ENCODE measurements at regions of chr12 and their contacts with region 1.

Region 1: GRCh38 chr12:92987362-92987761 is 58.3 kb upstream of the EEA1 start:
- DNase-seq: peak; percentile 48
- H3K4me3 ChIP-seq: no peak overlapping the region; a peak in 1 of 4 replicates
- H3K27ac ChIP-seq: peak overlapping the region in 1 of 2 experiments; percentile 34; a peak in 1 of 4 replicates
- H3K4me1 ChIP-seq: peaks cover 0 to 5% of the 10 kb centered on the region in 2 experiments; a peak in 1 of 4 replicates
- H3K27me3 ChIP-seq: no peaks in the 10 kb centered on the region
- CTCF ChIP-seq: peak; percentile 72
- EP300 ChIP-seq: no peak
- RAD21 ChIP-seq: peak; percentile 91

Region 2: DNA sequence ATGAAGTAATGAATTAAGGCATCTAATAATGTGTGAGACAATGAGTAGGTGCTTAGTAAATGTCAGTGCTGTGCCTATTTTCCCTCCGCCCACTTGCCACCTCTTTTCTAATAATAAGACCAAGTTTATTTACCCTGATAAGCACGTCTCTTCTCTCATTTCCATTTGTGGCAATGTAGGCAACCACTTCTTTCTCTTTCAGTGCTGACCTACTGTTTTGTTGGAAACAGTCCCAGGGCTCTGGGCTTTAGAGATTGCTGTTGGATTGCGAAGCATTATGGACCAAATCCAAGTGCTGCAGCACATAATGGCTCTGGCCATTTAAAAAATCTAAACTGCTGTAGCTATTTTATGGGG is 425.8 kb before region 1 on chr12:
- CTCF ChIA-PET with region 1: no interaction called
- POLR2A ChIA-PET with region 1: no interaction called
- DNase-seq: no peak
- H3K4me3 ChIP-seq: no peak overlapping the region
- H3K27ac ChIP-seq: peak overlapping the region in 1 of 2 experiments; percentile 43; a peak in 2 of 4 replicates
- H3K4me1 ChIP-seq: peaks cover 0 to 2% of the 10 kb centered on the region in 2 experiments; a peak in 2 of 4 replicates
- H3K27me3 ChIP-seq: no peaks in the 10 kb centered on the region
- CTCF ChIP-seq: no peak
- EP300 ChIP-seq: no peak
- RAD21 ChIP-seq: no peak

Region 3: GRCh38 chr12:92879698-92880305 is 107.6 kb before region 1 on chr12:
- CTCF ChIA-PET with region 1: no interaction called
- POLR2A ChIA-PET with region 1: no interaction called
- DNase-seq: no peak
- H3K4me3 ChIP-seq: no peak overlapping the region
- H3K27ac ChIP-seq: no peak overlapping the region
- H3K4me1 ChIP-seq: no peaks in the 10 kb centered on the region
- H3K27me3 ChIP-seq: no peaks in the 10 kb centered on the region
- CTCF ChIP-seq: no peak
- EP300 ChIP-seq: no peak
- RAD21 ChIP-seq: no peak

Region 4: GRCh38 chr12:93002293-93003054 is 15.1 kb after region 1 on chr12:
- CTCF ChIA-PET with region 1: interaction called, 22 read pairs
- POLR2A ChIA-PET with region 1: no interaction called
- DNase-seq: no peak
- H3K4me3 ChIP-seq: no peak overlapping the region
- H3K27ac ChIP-seq: 0 out of 4 replicates have a peak overlapping the region, but pooled peaks of 1 of the 2 experiments have one; percentile 9
- H3K4me1 ChIP-seq: peaks cover 0 to 2% of the 10 kb centered on the region in 2 experiments; a peak in 2 of 4 replicates
- H3K27me3 ChIP-seq: no peaks in the 10 kb centered on the region
- CTCF ChIP-seq: no peak
- EP300 ChIP-seq: no peak
- RAD21 ChIP-seq: no peak

Region 5: DNA sequence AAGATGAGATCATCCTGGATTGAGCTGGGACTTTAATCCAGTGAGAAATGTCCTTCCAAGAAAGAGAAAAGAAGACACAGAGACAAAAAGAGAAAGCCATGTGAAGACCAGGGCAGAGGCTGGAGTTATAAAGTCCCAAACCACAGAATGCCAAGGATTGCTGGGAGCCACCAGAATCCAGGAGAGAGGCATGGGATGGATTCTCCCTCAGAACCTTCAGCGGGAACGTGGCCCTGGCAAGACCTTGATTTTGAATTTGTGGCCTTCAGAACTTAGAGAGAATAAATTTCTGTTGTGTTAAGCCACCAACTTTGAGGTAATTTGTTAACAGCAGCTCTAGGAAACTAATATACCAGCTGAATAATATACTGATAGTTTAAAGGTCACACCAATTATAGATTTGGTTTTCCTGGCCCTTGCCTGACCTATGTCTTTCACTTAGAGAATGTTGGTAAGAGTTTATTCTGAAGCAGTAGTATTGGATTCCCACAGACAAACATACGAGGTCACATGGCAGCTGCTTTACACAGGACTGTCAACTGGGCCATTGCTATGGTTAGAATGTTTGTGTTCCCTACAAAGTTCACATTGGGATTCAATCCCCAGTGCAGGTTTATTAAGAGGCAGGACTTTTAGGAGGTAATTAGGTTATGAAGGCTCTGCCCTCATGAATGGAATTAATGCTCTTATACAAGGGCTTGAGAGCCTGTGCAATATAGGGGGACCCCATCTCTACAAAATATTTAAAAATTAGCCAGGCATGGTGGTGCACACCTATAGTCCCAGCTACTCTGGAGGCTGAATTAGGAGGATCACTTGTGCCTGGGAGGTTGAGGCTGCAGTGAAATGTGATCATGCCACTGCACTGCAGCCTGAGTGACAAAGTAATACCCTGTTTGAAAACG is 98.3 kb after region 1 on chr12:
- CTCF ChIA-PET with region 1: no interaction called
- POLR2A ChIA-PET with region 1: no interaction called
- DNase-seq: no peak
- H3K4me3 ChIP-seq: no peak overlapping the region
- H3K27ac ChIP-seq: no peak overlapping the region
- H3K4me1 ChIP-seq: peaks cover 0 to 28% of the 10 kb centered on the region in 2 experiments; a peak in 2 of 4 replicates
- H3K27me3 ChIP-seq: no peaks in the 10 kb centered on the region
- CTCF ChIP-seq: no peak
- EP300 ChIP-seq: no peak
- RAD21 ChIP-seq: no peak

Region 6: GRCh38 chr12:93380480-93381121 is 393.2 kb after region 1 on chr12:
- CTCF ChIA-PET with region 1: interaction called, 34 read pairs
- POLR2A ChIA-PET with region 1: no interaction called
- DNase-seq: peak; percentile 50
- H3K4me3 ChIP-seq: peak overlapping the region; percentile 73 to 88
- H3K27ac ChIP-seq: peak overlapping the region; percentile 86 to 88
- H3K4me1 ChIP-seq: peaks cover 9 to 15% of the 10 kb centered on the region in 2 experiments; a peak in 3 of 4 replicates
- H3K27me3 ChIP-seq: no peaks in the 10 kb centered on the region
- CTCF ChIP-seq: peak; percentile 55
- EP300 ChIP-seq: no peak
- RAD21 ChIP-seq: peak; percentile 69

Region 7: GRCh38 chr12:93397412-93397811 is 410.1 kb after region 1 on chr12:
- CTCF ChIA-PET with region 1: interaction called, 102 read pairs
- POLR2A ChIA-PET with region 1: no interaction called
- DNase-seq: no peak
- H3K4me3 ChIP-seq: no peak overlapping the region
- H3K27ac ChIP-seq: peak overlapping the region in 1 of 2 experiments; percentile 16; a peak in 1 of 4 replicates
- H3K4me1 ChIP-seq: no peaks in the 10 kb centered on the region
- H3K27me3 ChIP-seq: no peaks in the 10 kb centered on the region
- CTCF ChIP-seq: no peak
- EP300 ChIP-seq: no peak
- RAD21 ChIP-seq: no peak

Region 8: GRCh38 chr12:93419388-93420034 is 432.1 kb after region 1 on chr12:
- CTCF ChIA-PET with region 1: interaction called, 17 read pairs
- POLR2A ChIA-PET with region 1: no interaction called
- DNase-seq: peak; percentile 41
- H3K4me3 ChIP-seq: no peak overlapping the region
- H3K27ac ChIP-seq: peak overlapping the region in 1 of 2 experiments; percentile 47; a peak in 2 of 4 replicates
- H3K4me1 ChIP-seq: peaks cover 7 to 24% of the 10 kb centered on the region in 2 experiments; a peak in 3 of 4 replicates
- H3K27me3 ChIP-seq: no peaks in the 10 kb centered on the region
- CTCF ChIP-seq: peak; percentile 77
- EP300 ChIP-seq: no peak
- RAD21 ChIP-seq: peak; percentile 58